Dendritic cell treated with granulocyte-macrophage colony-stimulating factor and Interleukin-4, amounts not matched to agents 40 ng/mL and 50 ng/mL, for 4 days (primary cell): ENCODE measurements at regions of chr10 and their contacts with region 1.

Region 1: GRCh38 chr10:71314028-71314693 is 4.9 kb upstream of the SLC29A3 start:
- H3K4me3 Mint-ChIP-seq: peak overlapping the region; percentile 5
- H3K27ac Mint-ChIP-seq: peak overlapping the region; percentile 51
- H3K4me1 Mint-ChIP-seq: peaks cover 71% of the 10 kb centered on the region
- H3K27me3 Mint-ChIP-seq: peaks cover 11% of the 10 kb centered on the region

Region 2: GRCh38 chr10:71217266-71218045 is 96.7 kb before region 1 on chr10:
- intact Hi-C with region 1: no loop called
- H3K4me3 Mint-ChIP-seq: peak overlapping the region; percentile 66
- H3K27ac Mint-ChIP-seq: peak overlapping the region; percentile 55
- H3K4me1 Mint-ChIP-seq: peaks cover 46% of the 10 kb centered on the region
- H3K27me3 Mint-ChIP-seq: peaks cover 80% of the 10 kb centered on the region

Region 3: DNA sequence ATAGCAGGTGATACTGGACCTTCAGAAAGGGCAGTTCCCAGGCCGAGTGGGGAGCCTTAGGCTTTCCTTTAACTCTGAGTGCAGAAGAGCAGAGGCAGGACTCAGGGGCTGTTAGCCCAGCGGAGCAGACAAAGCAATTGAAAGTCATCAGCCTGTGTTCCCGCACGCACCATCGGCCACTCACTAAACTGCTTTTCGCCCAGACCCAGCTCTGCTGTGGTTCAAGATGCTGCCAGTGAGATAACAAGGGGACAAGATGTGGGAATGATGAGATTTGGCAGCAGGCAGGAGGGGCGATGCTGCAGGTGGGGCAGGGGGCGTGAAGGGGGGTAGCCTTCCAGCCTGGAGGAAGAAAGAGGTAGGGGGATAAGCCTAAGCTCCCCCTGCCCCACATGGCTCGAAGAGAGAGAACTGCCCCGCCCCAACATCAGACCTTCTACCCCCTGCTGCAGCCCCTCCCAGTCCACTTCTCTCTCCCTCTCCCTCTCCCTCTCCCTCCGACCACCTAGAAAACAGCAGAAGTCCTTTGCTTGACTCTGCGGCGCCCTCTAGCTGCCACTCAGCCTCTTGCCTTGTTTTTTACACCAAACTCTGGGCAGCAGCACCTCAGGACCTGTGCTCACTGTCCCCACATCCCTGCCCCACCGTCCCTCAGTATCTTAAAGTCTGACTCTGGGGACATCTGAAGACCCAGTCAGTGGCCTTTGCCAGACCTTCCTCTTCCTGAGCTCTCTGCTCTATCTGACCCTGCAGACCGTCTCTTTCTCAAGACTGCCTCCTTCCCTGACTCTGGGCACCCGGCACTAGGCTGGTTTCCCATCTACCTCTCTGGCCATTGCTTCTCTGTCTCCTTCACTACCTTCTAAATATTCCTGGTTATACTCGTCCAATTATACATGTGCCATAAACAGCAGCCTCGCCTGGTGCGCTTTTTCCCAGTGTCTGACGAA is 294.9 kb after region 1 on chr10:
- intact Hi-C with region 1: loop called (anchors 2 kb)
- H3K4me3 Mint-ChIP-seq: no peak overlapping the region
- H3K27ac Mint-ChIP-seq: no peak overlapping the region
- H3K4me1 Mint-ChIP-seq: peaks cover 38% of the 10 kb centered on the region
- H3K27me3 Mint-ChIP-seq: peaks cover 3% of the 10 kb centered on the region

Region 4: GRCh38 chr10:71696628-71697326 is 382.6 kb after region 1 on chr10:
- intact Hi-C with region 1: loop called (anchors 5 kb)
- H3K4me3 Mint-ChIP-seq: no peak overlapping the region
- H3K27ac Mint-ChIP-seq: peak overlapping the region; percentile 97
- H3K4me1 Mint-ChIP-seq: peaks cover 93% of the 10 kb centered on the region
- H3K27me3 Mint-ChIP-seq: no peaks in the 10 kb centered on the region